Posterior cingulate gyrus (tissue), 11 donors: ENCODE measurements at regions of chr3 and their contacts with region 1.

Region 1: DNA sequence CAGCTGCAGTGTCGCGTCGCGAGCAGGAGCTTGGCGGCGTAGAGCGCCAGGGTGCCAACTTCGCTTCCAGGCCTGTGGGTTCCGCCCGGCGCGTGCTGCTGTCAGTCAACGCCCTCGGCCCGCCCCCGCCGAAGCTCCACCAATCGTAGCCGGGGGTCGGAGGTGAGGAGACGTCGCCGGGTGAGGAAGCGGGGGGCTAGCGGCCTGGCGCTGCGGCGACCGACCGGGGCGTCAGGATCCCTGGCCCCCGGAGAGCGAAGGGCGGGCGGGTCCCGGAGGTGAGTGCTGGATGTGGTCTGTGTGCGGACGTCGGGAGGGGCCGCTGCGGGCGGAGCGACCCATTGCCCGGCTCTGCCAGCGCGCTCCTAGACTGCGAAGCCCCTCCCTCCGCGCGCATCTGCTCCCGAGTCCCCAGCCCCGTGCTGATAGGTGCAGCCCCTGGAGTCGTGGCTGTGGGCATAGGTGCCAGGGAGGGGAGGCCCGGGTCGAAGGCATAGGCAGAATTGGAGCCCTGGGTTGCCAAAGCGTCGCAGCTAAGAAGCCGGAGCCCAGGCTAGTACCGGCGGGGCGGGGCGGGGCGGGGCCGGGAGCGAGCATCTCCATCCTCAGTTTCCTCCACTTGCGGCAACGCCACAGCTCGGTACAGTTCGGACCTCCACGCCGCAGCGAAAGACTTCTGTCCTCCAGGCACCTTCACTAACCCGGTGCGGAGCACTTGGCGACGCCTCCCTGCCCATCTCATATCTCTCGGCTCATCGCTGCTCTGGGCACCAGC is at the start of gene NXPE3:
- DNase-seq: peak; percentile 93 to 100 (median 97)

Region 2: DNA sequence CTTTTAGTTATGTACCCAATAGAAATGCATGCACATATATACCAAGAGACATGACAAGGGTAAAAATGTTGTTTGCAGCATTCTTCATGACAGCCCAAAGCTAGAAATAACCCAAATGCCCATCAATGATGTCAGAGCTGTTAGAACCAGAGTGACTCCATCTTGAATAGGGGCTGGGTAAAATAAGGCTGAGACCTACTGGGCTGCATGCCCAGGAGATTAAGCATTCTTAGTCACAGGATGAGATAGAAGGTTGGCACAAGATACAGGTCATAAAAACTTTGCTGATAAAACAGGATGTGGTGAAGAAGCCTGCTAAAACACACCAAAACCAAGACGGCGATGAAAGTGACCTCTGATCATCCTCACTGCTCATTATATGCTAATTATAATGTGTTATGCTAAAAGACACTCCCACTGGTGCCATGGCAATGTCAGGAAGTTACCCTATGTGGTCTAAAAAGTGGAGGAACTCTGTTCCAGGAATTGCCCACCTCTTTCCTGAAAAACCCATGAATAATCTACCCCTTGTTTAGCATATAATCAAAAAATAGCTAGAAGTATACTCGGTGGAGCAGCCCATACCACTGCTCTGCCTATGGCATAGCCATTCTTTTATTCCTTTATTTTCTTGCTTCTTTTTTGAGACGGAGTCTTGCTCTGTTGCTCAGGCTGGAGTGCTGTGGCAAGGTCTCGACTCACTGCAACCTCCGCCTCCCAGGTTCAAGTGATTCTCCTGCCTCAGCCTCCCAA is 135.2 kb before region 1 on chr3:
- intact Hi-C with region 1: no loop called
- DNase-seq: no peak

Region 3: GRCh38 chr3:101685870-101686412 is 93.3 kb before region 1 on chr3:
- intact Hi-C with region 1: loop called (anchors 5 kb)
- DNase-seq: no peak

Region 4: DNA sequence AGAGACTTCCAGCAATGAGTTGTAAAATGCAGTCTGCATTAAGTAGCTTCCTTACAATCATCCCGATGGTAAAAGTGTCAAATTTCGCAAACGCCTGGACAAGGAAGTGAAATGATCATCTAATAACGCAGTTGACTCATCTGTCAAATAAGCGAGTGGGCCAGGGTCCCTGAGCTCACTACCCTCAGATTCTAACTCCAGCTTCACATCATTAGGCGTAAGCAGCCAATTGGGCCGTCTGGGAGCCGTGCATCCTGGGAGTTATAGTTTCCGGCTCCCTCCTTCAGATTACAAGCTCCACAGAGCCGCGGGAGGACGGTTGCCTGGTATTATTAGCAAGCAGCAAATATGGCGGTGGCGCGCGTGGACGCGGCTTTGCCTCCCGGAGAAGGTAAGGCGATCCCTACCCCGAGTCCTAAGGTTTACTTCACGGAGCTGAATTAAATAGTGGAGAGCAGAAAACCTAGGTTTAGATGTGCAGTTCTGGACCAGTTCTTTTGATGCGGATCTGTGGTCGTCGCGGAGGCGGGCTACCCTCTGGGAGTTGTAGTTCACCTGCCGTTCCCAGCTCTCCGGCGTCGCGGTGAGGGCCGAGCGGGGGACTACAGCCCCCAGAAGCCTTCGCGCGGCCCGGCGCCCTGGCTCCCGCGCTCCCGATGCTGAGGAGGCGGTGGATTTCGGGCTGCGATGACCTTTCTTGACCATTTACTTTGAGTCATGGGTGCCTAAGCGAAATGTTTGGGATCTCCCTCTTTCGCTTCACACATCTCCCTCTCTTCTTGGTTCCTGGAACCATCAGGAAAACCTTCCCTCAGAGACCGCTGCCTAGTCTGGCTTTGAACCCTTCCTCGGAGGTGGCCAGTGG is 54.7 kb before region 1 on chr3 and contains the start of gene CEP97:
- intact Hi-C with region 1: loop called (anchors 2 kb)
- DNase-seq: peak; percentile 85 to 99 (median 92)

Region 5: DNA sequence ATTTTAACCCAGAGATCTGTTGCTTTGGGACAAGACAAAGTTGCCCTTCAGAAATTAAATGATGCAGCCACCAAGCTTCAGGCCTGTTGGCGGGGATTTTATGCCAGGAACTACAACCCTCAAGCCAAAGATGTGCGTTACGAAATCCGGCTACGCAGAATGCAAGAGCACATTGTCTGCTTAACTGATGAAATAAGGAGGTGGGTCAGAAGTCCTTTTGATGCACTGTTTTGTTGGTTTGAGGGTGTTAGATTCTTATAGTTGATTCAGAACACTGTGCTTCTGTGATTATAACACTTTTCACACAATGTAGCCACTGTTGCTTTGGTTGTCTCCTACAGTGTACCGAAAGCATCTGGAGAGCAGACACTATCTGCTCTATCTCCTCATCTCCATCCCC is 21.0 kb before region 1 on chr3:
- intact Hi-C with region 1: no loop called
- DNase-seq: peak in 1 of 10 donors; percentile 22

Region 6: DNA sequence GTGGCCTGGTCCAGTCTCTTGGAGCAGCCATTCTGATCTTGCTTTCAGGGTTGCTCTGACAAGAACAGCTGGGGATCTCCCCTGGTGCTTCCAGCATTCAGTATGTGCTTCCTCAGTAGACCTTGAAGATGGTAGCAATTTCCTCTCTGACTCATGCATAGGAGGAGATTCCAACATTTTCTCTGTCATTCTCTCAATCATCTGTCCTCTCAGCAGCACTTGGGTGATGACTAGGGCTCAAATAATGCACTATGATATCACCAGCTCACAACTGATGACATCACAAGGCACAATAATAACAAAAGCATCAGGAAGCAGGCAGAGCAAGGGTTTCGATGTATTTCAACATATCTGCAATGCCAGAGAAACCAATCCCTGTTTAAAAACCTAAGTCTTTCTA is 122.8 kb after region 1 on chr3:
- intact Hi-C with region 1: no loop called
- DNase-seq: no peak